ENCODE measurements at regions of chr19 and their contacts with region 1.

Region 1: GRCh38 chr19:42268704-42269477 is at the start of gene CIC:
- DNase-seq: peak; percentile 100
- H3K4me3 Mint-ChIP-seq: no peak within 1 kb of the TSS
- H3K27ac Mint-ChIP-seq: peak within 1 kb of the TSS; percentile 99
- H3K4me1 Mint-ChIP-seq: peaks cover 30% of the 10 kb centered on the region
- H3K27me3 Mint-ChIP-seq: no peaks in the 10 kb centered on the region
- total RNA-seq, gene CIC: 61.2 and 65.6 TPM in 2 replicates

Region 2: DNA sequence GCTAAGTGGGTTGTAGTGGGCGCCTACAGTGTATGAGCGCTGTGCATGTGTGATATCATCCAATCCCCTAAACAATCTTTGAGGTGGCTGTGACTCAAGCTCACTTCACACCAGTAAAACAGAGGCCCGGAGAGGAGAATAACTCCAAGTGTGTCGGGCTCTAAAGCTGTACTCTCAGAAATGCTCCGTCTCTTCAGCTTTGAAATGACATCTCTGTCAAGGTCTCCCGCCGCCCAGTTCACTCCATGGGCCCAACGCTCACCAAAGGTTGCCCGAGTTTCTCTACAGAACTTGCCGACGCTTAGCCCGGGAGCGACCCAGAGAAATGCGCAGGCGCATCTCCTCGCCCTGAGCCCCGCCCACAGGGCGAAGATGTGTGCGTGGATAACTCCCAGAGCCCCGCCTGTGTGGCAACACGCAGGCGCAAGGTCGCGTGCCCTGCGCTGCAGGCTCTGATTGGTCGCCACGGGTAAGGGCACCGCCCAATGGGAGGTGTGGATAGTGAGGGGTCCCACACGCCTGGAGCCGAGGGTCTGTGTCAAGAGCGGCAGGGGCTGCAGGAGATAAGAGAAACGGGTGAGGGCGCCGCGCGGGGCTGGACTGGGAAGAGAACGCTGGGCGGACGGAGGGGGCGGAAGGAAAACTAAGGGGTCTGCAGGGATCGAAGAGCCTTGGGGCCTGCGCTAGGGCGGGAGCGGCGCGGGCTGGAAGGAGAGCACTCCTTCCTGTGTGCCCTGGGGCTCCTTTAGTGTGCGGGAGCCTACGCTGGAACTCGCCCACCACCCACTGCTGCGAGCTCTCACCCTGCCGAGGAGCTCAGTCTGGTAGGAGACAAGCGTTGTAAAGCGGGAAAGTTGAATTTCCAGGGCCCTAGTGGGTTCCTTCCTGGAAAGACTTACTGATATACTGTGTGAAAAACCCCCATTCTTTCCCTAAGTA is 48.8 kb before region 1 on chr19 and contains the start of gene ZNF526:
- intact Hi-C with region 1: loop called (anchors 1 kb)
- DNase-seq: peak; percentile 100
- H3K4me3 Mint-ChIP-seq: peak within 1 kb of the TSS; percentile 96
- H3K27ac Mint-ChIP-seq: peak within 1 kb of the TSS; percentile 94
- H3K4me1 Mint-ChIP-seq: peaks cover 50% of the 10 kb centered on the region
- H3K27me3 Mint-ChIP-seq: peaks cover 2% of the 10 kb centered on the region
- total RNA-seq, gene ZNF526: 19.0 and 20.1 TPM in 2 replicates

Region 3: DNA sequence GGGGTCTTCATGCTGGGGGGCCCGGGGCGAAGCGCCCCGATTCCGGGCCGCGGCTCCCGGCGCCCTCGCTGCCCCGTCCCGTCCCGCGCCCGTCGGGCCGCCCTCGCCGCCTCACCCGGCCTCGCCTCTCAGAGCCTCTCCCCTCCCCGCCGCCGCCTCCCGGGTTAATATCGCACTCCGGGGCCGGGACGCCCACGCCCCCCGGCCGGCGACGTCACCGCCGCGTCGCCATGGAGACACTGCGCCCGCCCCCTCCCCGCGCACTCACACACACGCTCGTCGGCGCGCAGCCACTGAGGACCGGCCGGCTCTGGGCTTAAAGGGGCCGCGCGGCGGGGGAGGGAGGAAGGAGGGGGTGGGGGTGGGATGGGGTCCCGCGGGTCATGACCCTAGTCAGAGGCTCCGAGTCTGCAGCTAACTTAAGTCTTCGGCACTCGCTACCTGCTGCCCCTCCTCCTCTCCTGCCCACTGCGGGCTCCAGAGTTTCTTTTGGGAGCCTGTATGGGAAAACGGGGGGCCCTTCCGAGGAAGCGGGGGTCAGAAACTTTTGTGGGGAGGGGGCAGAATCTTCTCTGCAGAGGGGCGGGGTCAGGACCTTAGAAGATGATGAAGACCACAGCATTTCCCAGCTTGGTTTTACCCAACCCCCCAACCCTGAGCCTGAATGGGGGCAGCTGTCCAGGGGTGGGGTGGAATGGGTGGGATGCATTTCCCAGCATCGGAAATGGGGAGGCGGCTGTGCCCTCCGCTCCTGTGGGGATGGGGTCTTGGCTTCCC is 13.7 kb before region 1 on chr19 and contains the start of gene ERF:
- intact Hi-C with region 1: loop called (anchors 1 kb)
- DNase-seq: peak; percentile 98
- H3K4me3 Mint-ChIP-seq: peak within 1 kb of the TSS; percentile 78
- H3K27ac Mint-ChIP-seq: peak within 1 kb of the TSS; percentile 81
- H3K4me1 Mint-ChIP-seq: peaks cover 19% of the 10 kb centered on the region
- H3K27me3 Mint-ChIP-seq: peaks cover 10% of the 10 kb centered on the region
- total RNA-seq, gene ERF: 71.6 and 82.3 TPM in 2 replicates

Measured in activated CD4-positive, alpha-beta T cell treated with anti-CD3 and anti-CD28 coated beads, Interleukin-2, amount 10 ng/mL, durations not matched to agents 24 days and 14 days (primary cell).